ENCODE measurements at regions of chr14 and their contacts with region 1.

Region 1: DNA sequence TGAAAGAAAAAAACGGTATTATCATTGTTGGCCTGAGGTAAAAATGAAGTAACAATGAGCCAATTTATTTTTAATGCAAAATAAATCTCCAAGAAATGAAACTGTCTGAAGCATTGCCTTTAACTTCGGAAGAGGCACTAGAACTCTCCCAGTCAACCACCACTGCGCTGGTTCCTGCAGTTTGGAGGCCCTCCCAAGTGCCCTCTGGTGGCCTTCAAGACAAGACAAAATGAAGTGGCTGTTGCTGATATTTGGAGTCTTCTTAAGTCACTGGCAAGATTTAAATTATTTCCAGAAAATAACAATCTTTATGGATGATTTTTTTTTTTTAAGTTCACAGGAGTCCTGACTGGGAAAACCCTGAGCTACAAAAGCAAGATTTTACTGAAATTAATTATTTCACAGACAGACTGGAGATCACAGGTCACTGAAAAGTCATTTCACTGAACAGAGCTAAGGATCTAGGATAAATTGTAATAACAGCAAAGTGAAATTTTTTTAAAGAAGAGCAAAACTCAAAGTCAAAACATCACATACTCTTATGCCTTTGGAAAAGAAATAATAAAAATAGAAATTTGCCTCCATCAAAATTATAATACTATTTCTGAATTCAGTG is 58.2 kb downstream of the DICER1 start:
- DNase-seq: peak in 7 of 9 experiments; percentile 21 to 62 (median 28)
- ATAC-seq: peak; percentile 63
- H3K4me3 ChIP-seq: no peak overlapping the region
- H3K4me3 Mint-ChIP-seq: no peak overlapping the region
- H3K27ac ChIP-seq: no peak overlapping the region
- H3K27ac Mint-ChIP-seq: peak overlapping the region; percentile 35
- H3K4me1 ChIP-seq: no peaks in the 10 kb centered on the region
- H3K4me1 Mint-ChIP-seq: peaks cover 31% of the 10 kb centered on the region
- H3K27me3 ChIP-seq: no peaks in the 10 kb centered on the region
- H3K27me3 Mint-ChIP-seq: no peaks in the 10 kb centered on the region
- CTCF ChIP-seq: peak; percentile 55

Region 2: GRCh38 chr14:94689218-94689984 is 409.7 kb before region 1 on chr14:
- CTCF ChIA-PET with region 1: interaction called, 5 read pairs
- POLR2A ChIA-PET with region 1: no interaction called
- intact Hi-C with region 1: loop called in 1 of 2 experiments (anchors 2 kb)
- DNase-seq: peak; percentile 10 to 54 (median 30)
- ATAC-seq: peak; percentile 49
- H3K4me3 ChIP-seq: no peak overlapping the region
- H3K4me3 Mint-ChIP-seq: no peak overlapping the region
- H3K27ac ChIP-seq: no peak overlapping the region
- H3K27ac Mint-ChIP-seq: no peak overlapping the region
- H3K4me1 ChIP-seq: no peaks in the 10 kb centered on the region
- H3K4me1 Mint-ChIP-seq: peaks cover 2% of the 10 kb centered on the region
- H3K27me3 ChIP-seq: no peaks in the 10 kb centered on the region
- H3K27me3 Mint-ChIP-seq: peaks cover 22% of the 10 kb centered on the region
- CTCF ChIP-seq: peak; percentile 72

Region 3: GRCh38 chr14:95134304-95134933 is 35.3 kb after region 1 on chr14:
- CTCF ChIA-PET with region 1: no interaction called
- POLR2A ChIA-PET with region 1: no interaction called
- intact Hi-C with region 1: no loop called
- DNase-seq: no peak
- ATAC-seq: no peak
- H3K4me3 ChIP-seq: no peak overlapping the region
- H3K4me3 Mint-ChIP-seq: no peak overlapping the region
- H3K27ac ChIP-seq: no peak overlapping the region
- H3K27ac Mint-ChIP-seq: no peak overlapping the region
- H3K4me1 ChIP-seq: peaks cover 5% of the 10 kb centered on the region
- H3K4me1 Mint-ChIP-seq: peaks cover 44% of the 10 kb centered on the region
- H3K27me3 ChIP-seq: no peaks in the 10 kb centered on the region
- H3K27me3 Mint-ChIP-seq: no peaks in the 10 kb centered on the region
- CTCF ChIP-seq: no peak

Region 4: DNA sequence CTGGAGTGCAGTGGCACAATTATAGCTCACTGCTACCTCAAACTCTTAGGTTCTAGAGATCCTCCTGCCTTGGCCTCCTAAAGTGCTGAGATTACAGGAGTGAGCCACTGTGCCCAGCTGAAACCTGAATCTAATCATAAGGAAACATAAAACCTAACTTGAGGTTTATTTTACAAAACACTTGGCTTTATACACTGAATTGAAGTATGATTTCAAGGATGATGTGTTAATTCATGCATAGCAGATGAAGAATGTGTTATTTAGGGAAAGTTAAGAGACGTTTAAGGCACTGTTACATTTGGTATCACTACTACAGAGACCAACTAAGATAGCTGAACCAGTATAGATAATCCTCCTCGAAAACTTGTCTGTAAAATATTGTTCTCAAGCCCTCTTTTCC is 51.8 kb after region 1 on chr14:
- CTCF ChIA-PET with region 1: no interaction called
- POLR2A ChIA-PET with region 1: no interaction called
- intact Hi-C with region 1: loop called in 1 of 2 experiments (anchors 2 kb)
- DNase-seq: no peak
- ATAC-seq: no peak
- H3K4me3 ChIP-seq: no peak overlapping the region
- H3K4me3 Mint-ChIP-seq: no peak overlapping the region
- H3K27ac ChIP-seq: no peak overlapping the region
- H3K27ac Mint-ChIP-seq: no peak overlapping the region
- H3K4me1 ChIP-seq: peaks cover 59% of the 10 kb centered on the region
- H3K4me1 Mint-ChIP-seq: peaks cover 84% of the 10 kb centered on the region
- H3K27me3 ChIP-seq: no peaks in the 10 kb centered on the region
- H3K27me3 Mint-ChIP-seq: no peaks in the 10 kb centered on the region
- CTCF ChIP-seq: no peak

Region 5: GRCh38 chr14:96445844-96446710 is 1347.0 kb after region 1 on chr14:
- CTCF ChIA-PET with region 1: no interaction called
- POLR2A ChIA-PET with region 1: no interaction called
- intact Hi-C with region 1: loop called in 1 of 2 experiments (anchors 5 kb)
- DNase-seq: no peak
- ATAC-seq: no peak
- H3K4me3 ChIP-seq: no peak overlapping the region
- H3K4me3 Mint-ChIP-seq: no peak overlapping the region
- H3K27ac ChIP-seq: no peak overlapping the region
- H3K27ac Mint-ChIP-seq: no peak overlapping the region
- H3K4me1 ChIP-seq: no peaks in the 10 kb centered on the region
- H3K4me1 Mint-ChIP-seq: no peaks in the 10 kb centered on the region
- H3K27me3 ChIP-seq: no peaks in the 10 kb centered on the region
- H3K27me3 Mint-ChIP-seq: peaks cover 8% of the 10 kb centered on the region
- CTCF ChIP-seq: no peak